Activated CD4-positive, alpha-beta T cell treated with anti-CD3 and anti-CD28 coated beads, Interleukin-2, amount 10 ng/mL, durations not matched to agents 7 days and 5 days (primary cell): ENCODE measurements at regions of chr2 and their contacts with region 1.

Region 1: GRCh38 chr2:29130295-29130694 is 15.1 kb downstream of the CLIP4 start:
- DNase-seq: peak; percentile 17
- H3K4me3 Mint-ChIP-seq: no peak overlapping the region
- H3K27ac Mint-ChIP-seq: peak overlapping the region; percentile 44
- H3K4me1 Mint-ChIP-seq: peaks cover 23% of the 10 kb centered on the region
- H3K27me3 Mint-ChIP-seq: no peaks in the 10 kb centered on the region

Region 2: DNA sequence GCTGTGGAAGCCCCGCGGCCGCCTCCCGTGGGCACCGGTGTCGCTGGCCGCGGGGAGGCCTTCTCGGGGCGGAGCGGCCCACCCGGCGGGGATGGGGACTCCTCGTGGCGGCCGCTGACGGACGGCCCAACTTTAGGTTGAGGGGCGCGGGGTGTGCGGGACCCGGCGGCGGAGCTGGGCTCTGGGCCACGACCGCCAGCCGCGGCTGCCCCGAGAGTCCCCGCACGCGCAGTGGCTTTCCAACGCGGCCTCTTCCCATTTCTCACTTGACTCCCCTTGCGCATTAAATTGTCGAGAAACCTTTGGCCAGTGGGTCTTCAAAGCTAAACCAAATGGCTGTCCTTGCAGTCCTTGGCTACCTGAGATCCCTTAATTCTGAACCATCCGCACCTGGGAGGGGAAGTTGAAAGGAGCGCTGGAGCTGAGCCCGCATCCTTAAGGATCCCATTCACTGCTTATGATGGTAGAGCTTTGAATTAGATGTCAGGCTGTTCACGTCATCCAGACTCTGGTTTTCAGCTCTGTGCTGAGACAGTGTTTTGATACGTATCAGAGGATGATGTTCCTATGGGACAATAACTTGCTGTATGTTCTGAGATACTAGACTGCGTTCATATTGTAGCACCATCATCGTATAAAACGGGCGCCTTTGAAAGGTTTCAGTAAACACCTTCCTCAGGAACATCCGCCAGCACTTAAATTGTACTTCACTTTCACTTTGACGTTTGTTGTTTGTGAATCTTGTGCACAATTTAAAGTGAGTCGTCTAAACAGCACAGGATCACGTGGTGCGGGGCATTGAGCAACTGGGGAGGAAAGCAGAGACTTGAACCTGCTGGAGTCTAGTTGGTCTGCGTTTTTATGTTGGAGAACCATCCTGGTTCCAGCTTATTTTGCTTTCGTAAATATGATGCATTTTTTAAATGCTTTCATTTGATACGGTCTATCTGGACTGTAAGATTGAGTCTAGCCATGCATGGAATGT is 14.2 kb before region 1 on chr2:
- CTCF ChIA-PET with region 1: interaction called, 27 read pairs
- POLR2A ChIA-PET with region 1: interaction called, 4 read pairs
- DNase-seq: peak; percentile 90
- H3K4me3 Mint-ChIP-seq: peak overlapping the region; percentile 86
- H3K27ac Mint-ChIP-seq: peak overlapping the region; percentile 99
- H3K4me1 Mint-ChIP-seq: peaks cover 55% of the 10 kb centered on the region
- H3K27me3 Mint-ChIP-seq: peaks cover 10% of the 10 kb centered on the region